ENCODE measurements at regions of chr6 and their contacts with region 1.

Region 1: GRCh38 chr6:53171605-53172446 is 23.2 kb upstream of the GCM1 start:
- DNase-seq: peak; percentile 79 to 92 (median 89)
- H3K4me3 ChIP-seq: no peak overlapping the region
- H3K27ac ChIP-seq: no peak overlapping the region
- H3K4me1 ChIP-seq: no peaks in the 10 kb centered on the region
- H3K27me3 ChIP-seq: no peaks in the 10 kb centered on the region
- CTCF ChIP-seq: peak; percentile 98 to 100 (median 99)
- EP300 ChIP-seq: no peak
- POLR2A ChIP-seq: peak; percentile 22

Region 2: GRCh38 chr6:53281518-53282215 is 109.8 kb after region 1 on chr6:
- intact Hi-C with region 1: no loop called
- DNase-seq: no peak
- H3K4me3 ChIP-seq: no peak overlapping the region
- H3K27ac ChIP-seq: peak overlapping the region in 1 of 2 donors; percentile 40
- H3K4me1 ChIP-seq: peaks cover 9% of the 10 kb centered on the region
- H3K27me3 ChIP-seq: no peaks in the 10 kb centered on the region
- CTCF ChIP-seq: no peak
- EP300 ChIP-seq: no peak
- POLR2A ChIP-seq: no peak

Region 3: GRCh38 chr6:53474010-53474409 is 302.2 kb after region 1 on chr6:
- intact Hi-C with region 1: loop called in 1 of 4 experiments (anchors 5 kb)
- DNase-seq: no peak
- H3K4me3 ChIP-seq: no peak overlapping the region
- H3K27ac ChIP-seq: no peak overlapping the region
- H3K4me1 ChIP-seq: no peaks in the 10 kb centered on the region
- H3K27me3 ChIP-seq: peaks cover 2% of the 10 kb centered on the region
- CTCF ChIP-seq: no peak
- EP300 ChIP-seq: no peak
- POLR2A ChIP-seq: no peak

Region 4: GRCh38 chr6:53484476-53485280 is 312.9 kb after region 1 on chr6:
- intact Hi-C with region 1: loop called (anchors 2 to 5 kb)
- DNase-seq: peak in 4 of 5 donors; percentile 44 to 74 (median 58)
- H3K4me3 ChIP-seq: no peak overlapping the region
- H3K27ac ChIP-seq: no peak overlapping the region
- H3K4me1 ChIP-seq: no peaks in the 10 kb centered on the region
- H3K27me3 ChIP-seq: no peaks in the 10 kb centered on the region
- CTCF ChIP-seq: peak; percentile 87 to 90 (median 89)
- EP300 ChIP-seq: no peak
- POLR2A ChIP-seq: no peak

Region 5: DNA sequence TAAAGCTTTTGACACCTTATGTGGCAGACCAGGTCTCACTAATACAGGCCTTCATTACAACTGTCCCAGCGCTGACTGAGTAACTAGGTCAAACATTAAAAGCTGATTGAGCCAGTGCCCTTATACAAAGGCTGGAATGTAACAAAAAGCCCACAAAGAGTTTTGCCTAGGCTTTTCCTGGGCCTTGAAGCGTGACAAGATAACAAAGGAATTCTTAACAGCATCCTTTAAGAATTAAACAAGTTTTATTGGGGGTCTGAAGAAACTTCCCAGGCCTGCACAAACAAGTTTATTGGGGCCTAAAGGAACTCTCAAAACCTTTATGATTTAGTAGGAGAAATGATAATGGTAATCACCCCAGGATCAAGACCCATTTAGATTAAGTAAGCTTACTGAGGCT is 1407.2 kb after region 1 on chr6:
- intact Hi-C with region 1: no loop called
- DNase-seq: no peak
- H3K4me3 ChIP-seq: no peak overlapping the region
- H3K27ac ChIP-seq: no peak overlapping the region
- H3K4me1 ChIP-seq: no peaks in the 10 kb centered on the region
- H3K27me3 ChIP-seq: no peaks in the 10 kb centered on the region
- CTCF ChIP-seq: no peak
- EP300 ChIP-seq: no peak
- POLR2A ChIP-seq: no peak

Measured in ovary (tissue), 10 donors.